Activated B cell treated with CpG ODN at 0.5 μM for 24 hours (primary cell): ENCODE measurements at regions of chr13 and their contacts with region 1.

Region 1: DNA sequence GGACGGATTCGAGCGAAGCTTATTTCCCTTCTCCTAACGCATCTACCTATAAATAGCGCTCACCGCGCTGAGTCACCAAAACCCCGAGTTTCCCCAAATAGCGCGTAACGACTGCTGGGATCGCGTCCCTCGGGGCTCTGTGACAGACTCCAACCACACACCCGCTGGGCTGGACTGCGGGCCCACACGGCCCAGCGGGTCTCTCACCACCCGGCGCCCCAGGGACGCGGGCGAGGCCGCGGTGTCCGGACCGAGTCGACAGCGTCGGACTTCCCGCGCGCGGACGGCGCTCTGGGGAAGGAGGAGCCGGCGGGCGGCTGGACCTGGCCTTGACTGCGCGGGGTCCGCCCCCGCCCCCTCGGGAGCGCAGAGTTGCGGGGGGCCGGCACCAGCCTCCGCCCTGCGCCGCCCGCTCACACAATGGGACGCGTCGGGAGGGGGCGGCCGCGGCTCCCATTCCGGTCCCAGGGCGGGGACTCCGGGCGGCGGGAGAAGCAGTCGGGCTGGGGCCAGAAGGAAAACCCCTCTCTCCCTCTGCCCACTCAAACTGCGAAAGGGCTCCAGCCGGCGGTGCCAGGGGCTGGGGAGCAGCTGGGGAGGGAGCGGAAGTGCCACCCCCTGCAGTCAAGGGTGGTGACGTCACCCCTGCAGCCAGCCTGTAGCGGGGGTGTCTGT is 108.8 kb downstream of the KCNRG start:
- DNase-seq: peak; percentile 86
- ATAC-seq: peak; percentile 59
- H3K4me3 Mint-ChIP-seq: peak overlapping the region; percentile 87
- H3K27ac Mint-ChIP-seq: peak overlapping the region; percentile 95
- H3K4me1 Mint-ChIP-seq: peaks cover 64% of the 10 kb centered on the region
- H3K27me3 Mint-ChIP-seq: peaks cover 2% of the 10 kb centered on the region
- CTCF ChIP-seq: no peak

Region 2: GRCh38 chr13:49936085-49936940 is 187.7 kb before region 1 on chr13 and contains the start of gene SPRYD7:
- CTCF ChIA-PET with region 1: no interaction called
- POLR2A ChIA-PET with region 1: interaction called, 21 read pairs
- intact Hi-C with region 1: loop called (anchors 1 kb)
- DNase-seq: peak; percentile 100
- ATAC-seq: peak; percentile 98
- H3K4me3 Mint-ChIP-seq: peak within 1 kb of the TSS; percentile 97
- H3K27ac Mint-ChIP-seq: peak within 1 kb of the TSS; percentile 91
- H3K4me1 Mint-ChIP-seq: peaks cover 32% of the 10 kb centered on the region
- H3K27me3 Mint-ChIP-seq: no peaks in the 10 kb centered on the region
- CTCF ChIP-seq: no peak
- total RNA-seq, gene SPRYD7: 3.7 and 4.5 TPM in 2 replicates

Region 3: DNA sequence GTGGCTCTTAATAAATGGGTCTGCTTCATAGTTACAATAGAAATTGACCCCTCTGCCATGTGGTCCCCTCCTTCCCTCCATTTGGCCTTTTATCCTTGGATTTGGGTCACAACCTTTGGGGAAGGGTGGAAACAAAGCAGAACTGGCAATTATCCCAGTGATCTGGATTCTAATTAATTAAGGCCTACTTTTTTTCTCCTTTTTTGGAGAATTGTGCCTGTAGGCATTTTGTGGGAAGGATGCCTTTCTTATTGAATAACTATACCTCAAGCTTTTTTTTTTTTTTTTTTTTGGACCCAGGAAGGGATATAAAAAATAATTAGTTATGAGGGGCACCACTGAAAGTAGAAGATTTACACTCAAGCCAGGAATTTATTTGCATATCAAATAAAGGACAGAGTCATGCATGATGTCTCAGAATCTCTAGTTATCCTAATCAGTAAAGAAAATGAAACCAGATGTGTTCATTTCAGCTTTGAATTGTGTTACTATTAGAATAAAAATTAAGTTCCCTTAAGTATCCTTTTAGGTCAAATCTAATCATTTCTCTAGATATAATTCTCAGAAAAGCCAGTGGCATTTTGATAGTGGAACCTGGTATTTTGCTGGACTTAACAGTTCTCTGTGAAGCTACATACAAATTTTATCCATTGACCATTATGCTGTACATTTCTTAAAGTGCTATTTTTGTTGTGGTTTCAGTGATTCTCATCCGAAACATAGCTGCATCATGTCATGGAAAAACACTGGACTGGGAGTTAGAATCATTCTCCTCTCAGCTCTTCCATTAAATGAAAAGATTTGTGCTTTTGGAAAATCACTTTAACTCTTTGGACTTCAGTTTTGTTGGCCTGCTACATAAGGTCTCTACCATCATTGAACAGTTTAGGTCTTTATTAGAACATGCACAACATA is 20.5 kb after region 1 on chr13:
- CTCF ChIA-PET with region 1: no interaction called
- POLR2A ChIA-PET with region 1: interaction called, 12 read pairs
- intact Hi-C with region 1: no loop called
- DNase-seq: no peak
- ATAC-seq: peak; percentile 25
- H3K4me3 Mint-ChIP-seq: no peak overlapping the region
- H3K27ac Mint-ChIP-seq: peak overlapping the region; percentile 18
- H3K4me1 Mint-ChIP-seq: peaks cover 18% of the 10 kb centered on the region
- H3K27me3 Mint-ChIP-seq: no peaks in the 10 kb centered on the region
- CTCF ChIP-seq: no peak

Region 4: DNA sequence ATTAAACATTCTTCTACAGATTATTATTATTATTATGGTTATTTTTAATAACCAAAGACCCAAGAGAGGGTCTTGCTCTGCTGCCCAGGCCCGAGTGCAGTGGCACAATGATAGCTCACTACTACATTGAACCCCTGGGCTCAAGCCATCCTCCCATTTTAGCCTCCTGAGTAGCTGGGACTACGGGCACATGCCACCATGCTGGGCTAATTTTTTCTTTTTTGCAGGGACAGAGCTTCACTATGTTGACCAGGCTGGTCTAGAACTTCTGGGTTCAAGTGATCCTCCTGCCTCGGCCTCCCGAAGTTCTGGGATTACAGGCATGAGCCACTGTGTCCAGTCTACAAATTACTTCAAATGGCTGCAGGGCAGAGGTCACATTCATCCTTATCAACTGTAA is 71.0 kb after region 1 on chr13:
- CTCF ChIA-PET with region 1: no interaction called
- POLR2A ChIA-PET with region 1: no interaction called
- intact Hi-C with region 1: no loop called
- DNase-seq: no peak
- ATAC-seq: no peak
- H3K4me3 Mint-ChIP-seq: no peak overlapping the region
- H3K27ac Mint-ChIP-seq: no peak overlapping the region
- H3K4me1 Mint-ChIP-seq: no peaks in the 10 kb centered on the region
- H3K27me3 Mint-ChIP-seq: no peaks in the 10 kb centered on the region
- CTCF ChIP-seq: no peak

Region 5: GRCh38 chr13:50236898-50237318 is 112.9 kb after region 1 on chr13:
- CTCF ChIA-PET with region 1: no interaction called
- POLR2A ChIA-PET with region 1: interaction called, 242 read pairs
- intact Hi-C with region 1: loop called (anchors 1 kb)
- DNase-seq: no peak
- ATAC-seq: peak; percentile 90
- H3K4me3 Mint-ChIP-seq: peak overlapping the region; percentile 55
- H3K27ac Mint-ChIP-seq: peak overlapping the region; percentile 92
- H3K4me1 Mint-ChIP-seq: peaks cover 53% of the 10 kb centered on the region
- H3K27me3 Mint-ChIP-seq: no peaks in the 10 kb centered on the region
- CTCF ChIP-seq: no peak

Region 6: DNA sequence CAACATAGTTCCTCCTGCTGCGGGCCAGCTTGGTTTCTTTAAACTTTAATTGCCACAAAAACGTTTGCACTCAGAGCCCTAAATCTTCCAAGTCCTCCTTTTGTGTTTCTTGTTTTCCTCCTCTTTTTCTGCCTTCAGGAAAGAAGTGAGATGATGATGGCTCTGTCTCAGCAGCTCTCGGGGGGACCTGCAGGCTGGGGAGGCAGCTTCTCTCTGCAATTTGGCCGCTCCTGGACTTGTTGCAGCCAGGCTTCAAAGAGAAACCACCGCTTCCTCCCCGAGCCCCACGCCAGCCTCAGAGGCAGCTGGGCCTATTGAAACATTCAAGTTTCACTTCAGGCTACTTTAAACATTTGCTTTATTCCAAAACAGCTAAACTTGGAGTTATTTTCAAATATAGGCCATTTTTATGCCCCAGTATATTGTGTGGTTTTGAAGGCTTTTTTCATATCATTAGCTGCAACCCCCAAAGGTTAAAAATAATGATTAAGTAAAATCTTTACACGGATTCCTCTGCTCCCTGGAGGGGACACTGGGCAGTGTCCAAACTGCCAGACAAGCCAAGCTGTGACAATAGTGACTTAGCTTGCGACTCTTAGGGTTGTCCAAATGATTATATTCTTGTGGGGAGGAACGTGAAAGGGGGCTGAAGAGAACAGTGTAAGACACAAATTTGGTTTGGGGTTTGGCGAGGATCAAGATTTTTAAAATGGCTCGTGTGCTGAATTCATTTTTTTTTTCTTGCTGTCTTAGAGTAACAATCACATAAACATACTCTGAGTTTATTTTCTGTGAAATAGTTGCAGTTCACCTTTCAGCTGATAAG is 388.7 kb after region 1 on chr13:
- CTCF ChIA-PET with region 1: interaction called, 4 read pairs
- POLR2A ChIA-PET with region 1: interaction called, 31 read pairs
- intact Hi-C with region 1: loop called (anchors 2 kb)
- DNase-seq: peak; percentile 40
- ATAC-seq: peak; percentile 81
- H3K4me3 Mint-ChIP-seq: no peak overlapping the region
- H3K27ac Mint-ChIP-seq: no peak overlapping the region
- H3K4me1 Mint-ChIP-seq: peaks cover 3% of the 10 kb centered on the region
- H3K27me3 Mint-ChIP-seq: no peaks in the 10 kb centered on the region
- CTCF ChIP-seq: no peak

Region 7: GRCh38 chr13:50580684-50581305 is 456.8 kb after region 1 on chr13:
- CTCF ChIA-PET with region 1: no interaction called
- POLR2A ChIA-PET with region 1: no interaction called
- intact Hi-C with region 1: no loop called
- DNase-seq: no peak
- ATAC-seq: no peak
- H3K4me3 Mint-ChIP-seq: no peak overlapping the region
- H3K27ac Mint-ChIP-seq: no peak overlapping the region
- H3K4me1 Mint-ChIP-seq: peaks cover 14% of the 10 kb centered on the region
- H3K27me3 Mint-ChIP-seq: no peaks in the 10 kb centered on the region
- CTCF ChIP-seq: no peak

Region 8: GRCh38 chr13:50801087-50801931 is 677.3 kb after region 1 on chr13:
- CTCF ChIA-PET with region 1: interaction called, 15 read pairs
- POLR2A ChIA-PET with region 1: interaction called, 187 read pairs
- intact Hi-C with region 1: loop called (anchors 1 kb)
- DNase-seq: peak; percentile 39
- ATAC-seq: peak; percentile 74
- H3K4me3 Mint-ChIP-seq: peak overlapping the region; percentile 64
- H3K27ac Mint-ChIP-seq: peak overlapping the region; percentile 95
- H3K4me1 Mint-ChIP-seq: peaks cover 40% of the 10 kb centered on the region
- H3K27me3 Mint-ChIP-seq: no peaks in the 10 kb centered on the region
- CTCF ChIP-seq: no peak